GM12878 (cell line): ENCODE measurements at regions of chr1 and their contacts with region 1.

Region 1: DNA sequence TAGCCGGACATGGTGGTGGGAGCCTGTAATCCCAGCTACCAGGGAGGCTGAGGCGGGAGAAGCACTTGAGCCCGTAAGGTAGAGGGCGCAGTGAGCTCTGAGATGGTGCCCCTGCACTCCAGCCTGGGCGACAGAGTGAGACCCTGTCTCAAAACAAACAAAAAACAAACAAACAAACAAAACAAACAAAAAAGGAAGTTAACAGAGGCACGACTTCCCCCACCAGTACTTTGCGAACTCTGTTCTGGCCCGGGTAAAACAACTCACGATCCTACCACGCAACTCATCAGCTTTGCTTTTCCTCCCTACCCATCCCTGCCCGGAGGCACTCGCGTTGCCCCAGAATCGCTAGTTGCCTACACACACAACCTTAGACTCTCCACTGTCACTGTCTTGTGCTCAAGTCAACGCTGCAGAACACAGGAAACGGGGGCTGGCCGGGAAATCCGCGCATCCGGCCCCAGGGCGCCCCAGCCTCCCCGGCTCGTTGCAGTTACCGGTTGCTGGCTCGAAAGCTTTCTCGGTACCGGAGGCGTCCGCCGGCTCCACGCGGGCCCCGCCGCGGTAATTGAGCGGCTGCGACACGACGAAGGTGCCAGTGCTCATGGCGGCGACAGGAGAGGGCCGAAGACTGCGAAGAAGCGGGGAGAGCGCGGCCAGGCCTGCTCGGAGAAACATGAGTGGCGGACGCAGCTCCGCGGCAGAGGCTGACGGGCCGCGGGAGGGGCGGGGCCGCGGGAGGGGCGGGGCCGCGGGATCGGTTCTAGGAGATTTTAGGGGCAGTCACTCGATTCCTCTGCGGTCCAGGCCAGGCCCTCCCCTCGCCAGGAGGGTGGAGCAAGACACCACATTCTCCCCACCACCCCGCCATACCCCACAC is at the start of gene ALDH9A1:
- DNase-seq: peak; percentile 41
- ATAC-seq: peak; percentile 95
- H3K4me3 ChIP-seq: peak within 1 kb of the TSS; percentile 73
- H3K27ac ChIP-seq: peak within 1 kb of the TSS; percentile 93
- H3K4me1 ChIP-seq: no peaks in the 10 kb centered on the region; the same call in 1 of the 2 replicates
- H3K27me3 ChIP-seq: no peaks in the 10 kb centered on the region
- CTCF ChIP-seq: peak in 2 of 3 experiments; percentile 19 to 28; a peak in 1 of 6 replicates
- EP300 ChIP-seq: no peak
- POLR2A ChIP-seq: peak; percentile 95
- RAD21 ChIP-seq: no peak
- polyA plus RNA-seq, gene ALDH9A1: 25.7 to 35.6 TPM

Region 2: DNA sequence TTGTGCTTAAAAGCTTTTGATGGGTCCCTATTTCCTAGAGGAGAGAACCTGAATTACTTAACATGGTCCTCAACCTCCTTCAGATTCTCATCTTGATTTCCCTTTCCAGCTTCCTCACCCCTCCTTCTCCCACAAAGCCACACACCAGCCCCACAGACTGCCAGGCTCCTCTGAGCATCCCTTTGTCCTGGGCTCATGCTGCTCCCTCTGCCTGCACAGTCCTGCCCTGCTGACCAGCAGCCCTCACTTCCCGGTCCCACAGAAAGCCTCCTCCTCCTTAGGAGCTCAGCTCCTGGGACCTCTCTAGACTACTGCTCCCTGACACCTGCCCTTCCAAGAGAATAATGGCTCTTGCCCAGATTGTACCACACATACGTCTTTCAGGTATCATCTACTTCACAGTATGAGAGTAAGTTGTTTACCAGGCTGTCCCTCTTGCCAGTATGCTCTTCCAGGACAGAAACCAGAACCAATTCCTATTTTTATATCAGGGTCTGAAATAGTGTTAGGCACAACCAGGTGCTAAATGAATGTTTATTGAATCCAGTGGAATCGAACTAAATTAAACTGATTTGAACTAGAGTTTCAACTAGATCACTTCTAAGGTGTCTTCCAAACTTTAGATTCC is 715.0 kb before region 1 on chr1:
- CTCF ChIA-PET with region 1: no interaction called
- POLR2A ChIA-PET with region 1: no interaction called
- RAD21 ChIA-PET with region 1: no interaction called
- SMC1A ChIA-PET with region 1: no interaction called
- in situ Hi-C with region 1: no loop called
- intact Hi-C with region 1: no loop called
- DNase-seq: no peak
- ATAC-seq: no peak
- H3K4me3 ChIP-seq: no peak overlapping the region
- H3K27ac ChIP-seq: no peak overlapping the region
- H3K4me1 ChIP-seq: no peaks in the 10 kb centered on the region
- H3K27me3 ChIP-seq: no peaks in the 10 kb centered on the region
- CTCF ChIP-seq: no peak
- EP300 ChIP-seq: no peak
- POLR2A ChIP-seq: no peak
- RAD21 ChIP-seq: no peak

Region 3: GRCh38 chr1:165630629-165631341 is 67.3 kb before region 1 on chr1 and contains the start of gene MGST3:
- CTCF ChIA-PET with region 1: interaction called, 8 read pairs
- POLR2A ChIA-PET with region 1: interaction called, 7 read pairs
- RAD21 ChIA-PET with region 1: interaction called, 8 read pairs
- SMC1A ChIA-PET with region 1: interaction called, 4 read pairs
- in situ Hi-C with region 1: no loop called
- intact Hi-C with region 1: loop called (anchors 5 kb)
- DNase-seq: peak; percentile 91
- ATAC-seq: peak; percentile 95
- H3K4me3 ChIP-seq: peak within 1 kb of the TSS; percentile 87
- H3K27ac ChIP-seq: peak within 1 kb of the TSS; percentile 92
- H3K4me1 ChIP-seq: peaks cover 20% of the 10 kb centered on the region
- H3K27me3 ChIP-seq: no peaks in the 10 kb centered on the region
- CTCF ChIP-seq: no peak
- EP300 ChIP-seq: 0 out of 4 replicates have a peak, but pooled peaks of 1 of the 2 experiments have one; percentile 24
- POLR2A ChIP-seq: peak; percentile 69
- RAD21 ChIP-seq: no peak
- polyA plus RNA-seq, gene MGST3: 137 to 145 TPM

Region 4: DNA sequence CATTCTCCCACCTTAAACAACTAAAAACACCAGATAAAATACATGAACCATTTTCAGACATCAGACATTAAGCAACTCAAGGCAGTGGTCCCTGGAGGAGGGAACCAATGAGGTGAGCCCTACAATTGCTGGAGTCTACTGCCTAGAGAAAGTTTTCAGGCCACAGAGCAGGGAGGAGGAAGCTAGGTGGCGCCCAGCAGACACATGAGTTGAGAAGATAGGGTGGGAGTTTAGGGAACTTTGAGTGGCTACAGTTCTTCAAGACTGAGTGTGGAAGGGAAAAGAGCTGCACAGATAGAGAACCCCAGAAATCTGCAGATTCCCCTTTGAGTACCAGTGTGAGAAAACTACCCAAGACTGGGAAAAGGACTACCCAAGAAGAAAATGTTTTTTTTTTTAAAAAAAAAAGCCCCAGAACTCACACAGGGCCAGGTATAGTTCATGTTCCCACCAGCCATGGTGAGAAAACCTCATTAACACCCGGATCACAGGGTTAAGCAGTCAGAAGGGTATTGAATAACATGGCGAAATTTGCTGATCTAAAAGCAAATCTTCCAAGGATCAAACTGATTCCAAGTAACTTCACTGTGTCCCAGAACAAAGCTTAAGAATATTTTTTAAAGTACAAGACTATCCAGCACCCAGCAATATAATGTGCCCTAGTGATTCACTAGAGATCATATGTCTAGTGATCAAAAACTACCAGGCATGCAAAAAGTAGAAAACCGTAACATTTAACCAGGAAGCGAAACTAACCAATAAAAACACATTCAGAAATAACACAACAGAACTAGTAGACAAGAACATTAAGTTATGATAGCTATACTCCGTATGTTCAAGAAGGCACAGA is 11.8 kb before region 1 on chr1:
- CTCF ChIA-PET with region 1: interaction called, 50 read pairs
- POLR2A ChIA-PET with region 1: interaction called, 13 read pairs
- RAD21 ChIA-PET with region 1: interaction called, 21 read pairs
- SMC1A ChIA-PET with region 1: interaction called, 26 read pairs
- in situ Hi-C with region 1: no loop called
- intact Hi-C with region 1: no loop called
- DNase-seq: peak; percentile 24
- ATAC-seq: peak; percentile 90
- H3K4me3 ChIP-seq: peak overlapping the region; percentile 21
- H3K27ac ChIP-seq: peak overlapping the region; percentile 77
- H3K4me1 ChIP-seq: peaks cover 10% of the 10 kb centered on the region
- H3K27me3 ChIP-seq: no peaks in the 10 kb centered on the region
- CTCF ChIP-seq: peak; percentile 25 to 44 (median 26); a peak in 3 of 6 replicates
- EP300 ChIP-seq: no peak
- POLR2A ChIP-seq: no peak
- RAD21 ChIP-seq: peak; percentile 32